ENCODE measurements at regions of chr1 and their contacts with region 1.

Region 1: DNA sequence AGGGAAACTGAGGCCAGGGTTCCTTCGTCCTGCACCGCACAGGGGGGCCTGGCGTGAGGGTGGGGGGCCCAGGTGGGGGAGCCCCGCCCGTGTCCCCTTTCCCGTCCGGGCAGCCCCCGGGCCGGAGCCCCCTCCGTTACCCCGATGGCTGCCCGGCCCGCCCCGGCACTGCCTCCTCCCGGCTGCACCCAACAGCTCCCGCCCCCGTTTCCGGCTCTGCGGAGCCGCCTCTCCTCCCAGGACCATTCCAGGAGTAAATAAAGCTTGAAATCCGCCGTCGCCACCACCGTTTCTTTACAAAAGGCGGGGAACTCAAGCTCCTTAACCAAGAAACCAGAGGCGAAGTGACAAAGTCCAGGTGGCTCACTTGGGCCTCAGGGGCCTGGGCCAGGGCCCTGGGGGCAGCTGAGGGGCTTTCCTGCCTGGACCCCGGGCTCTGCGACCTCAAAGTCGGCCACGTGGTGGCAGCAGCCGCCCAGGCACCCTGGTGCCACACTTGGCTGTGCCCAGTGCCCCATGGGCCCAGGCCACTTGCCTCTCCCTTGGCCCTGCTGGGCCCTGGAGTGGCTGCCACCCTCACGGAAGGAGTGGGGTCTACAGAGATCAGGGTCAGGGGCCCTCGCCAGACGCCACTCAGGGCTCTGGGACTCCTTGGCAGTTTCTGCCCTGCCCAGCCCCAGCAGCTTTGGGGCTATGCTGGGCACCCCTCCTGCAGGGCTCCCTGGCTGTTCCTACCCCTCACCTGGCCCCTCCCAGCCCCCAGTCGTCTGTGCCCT is 514 bp upstream of the FAAP20 start:
- DNase-seq: peak; percentile 81 to 97 (median 88)
- ATAC-seq: peak; percentile 71
- H3K4me3 ChIP-seq: peak overlapping the region; percentile 64 to 66
- H3K4me3 Mint-ChIP-seq: peak overlapping the region; percentile 87
- H3K27ac ChIP-seq: peak overlapping the region; percentile 77 to 93
- H3K27ac Mint-ChIP-seq: peak overlapping the region; percentile 93
- H3K4me1 ChIP-seq: peaks cover 42% of the 10 kb centered on the region
- H3K4me1 Mint-ChIP-seq: peaks cover 34% of the 10 kb centered on the region
- H3K27me3 ChIP-seq: no peaks in the 10 kb centered on the region
- H3K27me3 Mint-ChIP-seq: no peaks in the 10 kb centered on the region
- CTCF ChIP-seq: peak; percentile 79

Region 2: GRCh38 chr1:1665800-1666251 is 529.3 kb before region 1 on chr1:
- CTCF ChIA-PET with region 1: no interaction called
- POLR2A ChIA-PET with region 1: no interaction called
- intact Hi-C with region 1: no loop called
- DNase-seq: peak in 5 of 9 experiments; percentile 30 to 55 (median 47)
- ATAC-seq: no peak
- H3K4me3 ChIP-seq: no peak overlapping the region
- H3K4me3 Mint-ChIP-seq: no peak overlapping the region
- H3K27ac ChIP-seq: no peak overlapping the region
- H3K27ac Mint-ChIP-seq: no peak overlapping the region
- H3K4me1 ChIP-seq: no peaks in the 10 kb centered on the region
- H3K4me1 Mint-ChIP-seq: peaks cover 3% of the 10 kb centered on the region
- H3K27me3 ChIP-seq: no peaks in the 10 kb centered on the region
- H3K27me3 Mint-ChIP-seq: no peaks in the 10 kb centered on the region
- CTCF ChIP-seq: peak; percentile 30

Region 3: DNA sequence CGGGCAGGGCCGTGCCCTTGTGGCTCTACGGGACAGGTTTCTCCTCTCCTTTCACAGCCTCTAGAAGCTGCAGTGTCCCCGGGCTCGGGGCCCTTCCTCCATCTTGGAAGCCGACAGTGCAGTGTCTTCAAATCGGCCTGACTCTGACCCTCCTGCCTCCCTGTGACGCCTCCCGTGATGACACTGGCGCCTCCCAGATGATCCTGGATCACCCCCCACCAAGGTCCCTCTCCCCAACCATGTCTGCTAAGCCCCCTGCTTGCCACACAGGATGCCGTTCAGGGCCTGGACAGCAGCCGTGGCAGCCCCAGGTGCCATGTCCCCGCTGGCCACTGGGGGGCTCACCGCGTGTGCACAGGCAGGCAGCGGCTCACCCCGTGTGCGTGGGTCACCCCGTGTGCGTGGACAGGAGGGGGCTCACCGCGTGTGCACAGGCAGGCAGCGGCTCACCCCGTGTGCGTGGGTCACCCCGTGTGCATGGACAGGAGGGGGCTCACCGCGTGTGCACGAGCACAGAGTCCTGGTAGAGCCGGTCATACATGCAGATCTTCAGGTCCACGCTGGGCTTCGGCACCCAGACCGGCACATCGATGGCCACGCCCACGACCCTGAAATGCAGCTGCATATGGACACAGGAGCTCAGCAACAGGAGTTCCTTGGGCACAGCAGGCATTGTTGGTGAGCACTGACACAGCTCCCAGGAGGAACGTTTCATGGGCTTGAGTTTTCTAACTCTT is 251.1 kb before region 1 on chr1:
- CTCF ChIA-PET with region 1: no interaction called
- POLR2A ChIA-PET with region 1: no interaction called
- intact Hi-C with region 1: no loop called
- DNase-seq: peak; percentile 38 to 75 (median 58)
- ATAC-seq: peak; percentile 99
- H3K4me3 ChIP-seq: no peak overlapping the region
- H3K4me3 Mint-ChIP-seq: no peak overlapping the region
- H3K27ac ChIP-seq: no peak overlapping the region
- H3K27ac Mint-ChIP-seq: no peak overlapping the region
- H3K4me1 ChIP-seq: peaks cover 5% of the 10 kb centered on the region
- H3K4me1 Mint-ChIP-seq: peaks cover 3% of the 10 kb centered on the region
- H3K27me3 ChIP-seq: no peaks in the 10 kb centered on the region
- H3K27me3 Mint-ChIP-seq: no peaks in the 10 kb centered on the region
- CTCF ChIP-seq: peak; percentile 83

Region 4: GRCh38 chr1:2049718-2050427 is 145.2 kb before region 1 on chr1 and contains the start of gene PRKCZ:
- CTCF ChIA-PET with region 1: interaction called, 3 read pairs
- POLR2A ChIA-PET with region 1: no interaction called
- intact Hi-C with region 1: loop called in 1 of 2 experiments (anchors 5 kb)
- DNase-seq: peak; percentile 90 to 98 (median 95)
- ATAC-seq: peak; percentile 97
- H3K4me3 ChIP-seq: peak within 1 kb of the TSS; percentile 76 to 88
- H3K4me3 Mint-ChIP-seq: peak within 1 kb of the TSS; percentile 80
- H3K27ac ChIP-seq: peak within 1 kb of the TSS; percentile 33 to 64
- H3K27ac Mint-ChIP-seq: no peak within 1 kb of the TSS
- H3K4me1 ChIP-seq: peaks cover 30% of the 10 kb centered on the region
- H3K4me1 Mint-ChIP-seq: peaks cover 28% of the 10 kb centered on the region
- H3K27me3 ChIP-seq: peaks cover 0 to 5% of the 10 kb centered on the region in 2 experiments
- H3K27me3 Mint-ChIP-seq: no peaks in the 10 kb centered on the region
- CTCF ChIP-seq: no peak
- total RNA-seq, gene PRKCZ: 17.1 to 19.6 TPM

Region 5: DNA sequence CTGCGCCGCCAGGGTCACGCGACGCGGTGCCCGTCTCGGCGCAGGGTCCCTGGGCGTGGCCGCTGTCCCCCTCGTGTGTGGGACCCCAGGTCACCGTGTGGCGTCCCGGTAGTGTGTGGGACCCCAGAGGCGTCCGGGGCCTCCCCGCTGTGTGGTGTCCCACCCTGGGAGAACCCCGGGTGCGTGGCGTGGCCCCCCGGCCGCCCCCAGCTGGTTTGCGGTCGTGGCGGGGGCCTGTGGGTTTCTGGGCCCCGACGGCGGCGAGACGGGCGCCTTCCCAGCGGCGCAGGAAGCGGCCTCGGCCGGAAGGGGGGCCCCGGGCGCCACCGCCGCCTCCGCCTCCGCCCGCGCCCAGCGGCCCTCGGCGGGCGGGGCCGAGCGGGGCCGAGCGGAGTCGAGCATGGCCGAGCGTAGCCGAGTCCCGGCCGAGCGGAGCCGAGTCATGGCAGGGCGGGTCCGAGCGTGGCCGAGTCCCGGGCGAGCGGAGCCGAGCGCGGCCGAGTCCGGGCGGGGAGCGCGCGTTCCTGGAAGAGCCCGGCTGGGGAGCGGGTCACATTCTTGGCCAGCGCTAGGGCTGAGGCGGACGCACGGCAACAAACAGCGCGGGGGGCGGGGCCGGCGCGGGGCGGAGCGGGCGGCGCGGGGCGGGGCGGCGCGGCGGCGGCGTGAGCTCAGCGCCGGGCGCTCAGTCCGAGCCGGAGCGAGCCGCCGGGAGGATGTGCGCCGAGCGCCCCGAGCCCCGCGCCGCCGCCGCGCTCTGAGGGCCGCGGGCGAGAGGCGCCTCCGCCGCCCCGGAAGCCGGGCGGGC is 32.5 kb after region 1 on chr1:
- CTCF ChIA-PET with region 1: interaction called, 44 read pairs
- POLR2A ChIA-PET with region 1: interaction called, 13 read pairs
- intact Hi-C with region 1: loop called in 1 of 2 experiments (anchors 2 kb)
- DNase-seq: peak; percentile 88 to 97 (median 91)
- ATAC-seq: peak; percentile 70
- H3K4me3 ChIP-seq: peak overlapping the region in 1 of 2 experiments; percentile 24
- H3K4me3 Mint-ChIP-seq: peak overlapping the region; percentile 68
- H3K27ac ChIP-seq: peak overlapping the region in 1 of 2 experiments; percentile 66
- H3K27ac Mint-ChIP-seq: peak overlapping the region; percentile 74
- H3K4me1 ChIP-seq: peaks cover 24% of the 10 kb centered on the region
- H3K4me1 Mint-ChIP-seq: peaks cover 21% of the 10 kb centered on the region
- H3K27me3 ChIP-seq: no peaks in the 10 kb centered on the region
- H3K27me3 Mint-ChIP-seq: no peaks in the 10 kb centered on the region
- CTCF ChIP-seq: no peak

Region 6: DNA sequence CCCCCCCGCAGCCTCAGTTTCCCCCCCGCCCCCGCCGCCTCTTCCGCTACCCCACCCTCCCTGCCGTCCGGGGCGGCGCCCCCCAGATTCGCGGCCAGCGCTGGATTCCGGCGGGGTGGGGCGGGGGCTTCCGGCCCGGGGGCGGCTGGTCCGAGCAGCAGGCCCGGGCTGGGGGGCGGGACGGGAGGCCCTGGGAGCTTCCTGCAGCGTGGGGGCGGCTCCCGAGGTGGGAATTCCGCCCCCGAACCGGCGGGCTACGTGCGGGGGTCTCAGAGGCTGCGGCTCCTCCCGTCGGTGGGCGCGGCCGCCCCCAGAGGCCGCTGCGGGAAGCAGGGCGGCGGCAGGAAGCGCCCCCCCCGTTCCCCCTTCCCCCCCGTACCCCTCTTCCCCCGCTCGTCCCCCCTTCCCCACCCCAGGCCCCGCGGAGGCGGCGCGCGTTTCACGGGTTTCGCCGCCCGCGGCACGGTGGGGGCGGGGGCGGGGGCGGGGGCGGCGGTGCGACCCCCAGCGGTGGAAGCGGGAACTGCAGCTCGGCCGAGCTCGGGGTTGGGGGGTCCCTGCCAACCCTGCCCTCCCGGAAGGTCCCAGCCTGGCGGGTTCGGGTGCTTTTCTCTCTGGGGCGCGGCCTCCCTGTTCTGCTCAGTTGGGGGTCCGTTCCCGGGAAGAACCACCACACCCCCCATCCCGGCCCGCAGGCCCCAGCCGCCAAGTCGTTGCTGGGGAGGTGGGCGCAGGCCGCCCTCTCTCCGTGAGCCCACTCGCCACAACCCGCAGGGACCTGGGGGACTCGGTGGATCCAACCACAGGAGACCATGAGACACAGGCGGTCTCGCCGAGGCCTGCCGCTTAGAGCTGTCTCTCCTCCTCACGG is 120.0 kb after region 1 on chr1:
- CTCF ChIA-PET with region 1: interaction called, 31 read pairs
- POLR2A ChIA-PET with region 1: interaction called, 6 read pairs
- intact Hi-C with region 1: loop called (anchors 1 to 2 kb)
- DNase-seq: peak; percentile 52 to 89 (median 73)
- ATAC-seq: peak; percentile 50
- H3K4me3 ChIP-seq: peak overlapping the region; percentile 52 to 58
- H3K4me3 Mint-ChIP-seq: peak overlapping the region; percentile 64
- H3K27ac ChIP-seq: peak overlapping the region; percentile 70 to 82
- H3K27ac Mint-ChIP-seq: peak overlapping the region; percentile 79
- H3K4me1 ChIP-seq: peaks cover 76% of the 10 kb centered on the region
- H3K4me1 Mint-ChIP-seq: peaks cover 33% of the 10 kb centered on the region
- H3K27me3 ChIP-seq: no peaks in the 10 kb centered on the region
- H3K27me3 Mint-ChIP-seq: no peaks in the 10 kb centered on the region
- CTCF ChIP-seq: peak; percentile 97

Region 7: GRCh38 chr1:2412519-2413233 is 217.6 kb after region 1 on chr1 and contains the start of gene PEX10:
- CTCF ChIA-PET with region 1: interaction called, 8 read pairs
- POLR2A ChIA-PET with region 1: interaction called, 6 read pairs
- intact Hi-C with region 1: loop called in 1 of 2 experiments (anchors 1 kb)
- DNase-seq: peak; percentile 97 to 100 (median 99)
- ATAC-seq: peak; percentile 91
- H3K4me3 ChIP-seq: peak within 1 kb of the TSS; percentile 64 to 89
- H3K4me3 Mint-ChIP-seq: peak within 1 kb of the TSS; percentile 86
- H3K27ac ChIP-seq: peak within 1 kb of the TSS; percentile 81 to 93
- H3K27ac Mint-ChIP-seq: peak within 1 kb of the TSS; percentile 93
- H3K4me1 ChIP-seq: peaks cover 53% of the 10 kb centered on the region
- H3K4me1 Mint-ChIP-seq: peaks cover 40% of the 10 kb centered on the region
- H3K27me3 ChIP-seq: no peaks in the 10 kb centered on the region
- H3K27me3 Mint-ChIP-seq: no peaks in the 10 kb centered on the region
- CTCF ChIP-seq: no peak
- total RNA-seq, gene PEX10: 11.6 to 11.8 TPM

Region 8: GRCh38 chr1:2556277-2556677 is 361.2 kb after region 1 on chr1 and contains the start of gene TNFRSF14:
- CTCF ChIA-PET with region 1: no interaction called
- POLR2A ChIA-PET with region 1: interaction called, 3 read pairs
- intact Hi-C with region 1: loop called in 1 of 2 experiments (anchors 2 kb)
- DNase-seq: peak; percentile 50 to 92 (median 72)
- ATAC-seq: peak; percentile 75
- H3K4me3 ChIP-seq: peak within 1 kb of the TSS; percentile 67 to 99
- H3K4me3 Mint-ChIP-seq: peak within 1 kb of the TSS; percentile 99
- H3K27ac ChIP-seq: peak within 1 kb of the TSS; percentile 89 to 98
- H3K27ac Mint-ChIP-seq: peak within 1 kb of the TSS; percentile 99
- H3K4me1 ChIP-seq: peaks cover 37% of the 10 kb centered on the region
- H3K4me1 Mint-ChIP-seq: peaks cover 42% of the 10 kb centered on the region
- H3K27me3 ChIP-seq: no peaks in the 10 kb centered on the region
- H3K27me3 Mint-ChIP-seq: no peaks in the 10 kb centered on the region
- CTCF ChIP-seq: peak; percentile 19
- total RNA-seq, gene TNFRSF14: 158 to 160 TPM

Measured in CD8-positive, alpha-beta T cell (primary cell).